ENCODE measurements at regions of chr6 and their contacts with region 1.

Region 1: DNA sequence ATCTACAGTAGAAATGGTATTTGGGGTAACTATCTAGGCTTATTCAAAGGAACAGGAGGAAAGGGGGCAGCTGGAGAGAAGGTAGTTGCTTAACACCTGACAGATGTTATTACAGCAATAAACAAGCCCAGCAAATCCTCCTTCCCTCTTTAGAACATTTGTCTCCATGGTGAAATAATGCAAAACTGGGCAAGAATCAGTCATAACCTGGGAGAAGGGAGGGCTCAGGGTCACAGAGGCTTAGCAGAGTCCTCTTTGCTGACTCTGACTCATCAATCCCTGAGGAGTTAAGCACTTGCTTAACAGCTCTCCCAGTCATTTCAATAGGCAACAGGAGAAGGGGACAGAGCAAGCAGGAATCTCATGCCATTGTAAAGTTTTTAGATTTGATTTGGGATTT is 230.3 kb downstream of the IBTK start:
- DNase-seq: no peak
- ATAC-seq: peak; percentile 90

Region 2: GRCh38 chr6:81401970-81402690 is 615.2 kb before region 1 on chr6:
- intact Hi-C with region 1: no loop called
- DNase-seq: no peak
- ATAC-seq: no peak

Region 3: DNA sequence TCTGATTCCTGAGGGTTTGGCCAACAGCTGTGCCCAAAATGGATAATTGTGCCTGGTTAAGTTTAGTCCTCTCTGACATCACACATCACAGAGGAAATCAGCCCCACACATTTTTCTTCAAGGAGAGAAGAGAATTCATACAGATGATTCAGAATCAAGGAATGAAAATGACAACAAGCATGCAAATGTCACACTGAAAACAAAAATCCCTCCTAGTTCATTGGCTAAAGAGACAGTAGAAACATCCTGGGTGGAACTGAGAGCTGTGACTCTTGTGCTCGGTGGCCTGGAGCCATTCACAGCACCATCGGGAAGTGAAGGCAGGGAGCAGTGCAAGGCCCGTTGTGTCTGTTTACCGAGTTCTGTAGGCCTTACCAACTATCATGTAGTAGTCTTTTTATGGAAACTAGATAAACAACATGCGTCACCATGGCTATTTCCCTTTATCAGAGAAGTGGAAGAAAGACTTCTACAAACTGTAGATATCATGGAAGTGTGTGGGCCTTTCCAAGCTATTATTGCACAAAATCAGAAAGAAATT is 183.1 kb before region 1 on chr6:
- intact Hi-C with region 1: loop called (anchors 10 kb)
- DNase-seq: peak; percentile 68
- ATAC-seq: peak; percentile 97

Region 4: DNA sequence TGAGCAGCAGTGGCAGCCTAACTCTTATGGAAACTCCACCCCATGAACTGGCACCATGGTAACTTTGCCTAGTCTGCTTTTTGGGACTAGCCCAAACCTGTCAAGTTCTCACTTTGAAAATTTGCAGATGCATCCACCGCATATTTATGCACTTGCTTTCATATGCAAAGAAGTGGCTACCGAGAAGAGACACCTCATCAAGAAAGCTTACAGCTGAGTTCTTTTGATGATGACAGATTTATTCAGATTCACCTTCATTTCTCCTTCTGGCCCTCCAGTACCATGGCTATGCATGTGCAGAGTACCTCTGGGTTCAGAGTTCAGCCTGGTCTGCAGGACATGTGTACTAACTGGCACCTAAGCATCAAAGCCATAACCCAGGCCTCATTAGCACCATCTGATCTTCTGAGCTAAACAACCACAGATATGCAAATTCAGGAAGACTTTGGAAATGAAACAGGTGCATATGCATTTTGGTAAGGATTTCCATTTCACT is 110.5 kb before region 1 on chr6:
- intact Hi-C with region 1: loop called (anchors 10 kb)
- DNase-seq: no peak
- ATAC-seq: peak; percentile 43

Region 5: DNA sequence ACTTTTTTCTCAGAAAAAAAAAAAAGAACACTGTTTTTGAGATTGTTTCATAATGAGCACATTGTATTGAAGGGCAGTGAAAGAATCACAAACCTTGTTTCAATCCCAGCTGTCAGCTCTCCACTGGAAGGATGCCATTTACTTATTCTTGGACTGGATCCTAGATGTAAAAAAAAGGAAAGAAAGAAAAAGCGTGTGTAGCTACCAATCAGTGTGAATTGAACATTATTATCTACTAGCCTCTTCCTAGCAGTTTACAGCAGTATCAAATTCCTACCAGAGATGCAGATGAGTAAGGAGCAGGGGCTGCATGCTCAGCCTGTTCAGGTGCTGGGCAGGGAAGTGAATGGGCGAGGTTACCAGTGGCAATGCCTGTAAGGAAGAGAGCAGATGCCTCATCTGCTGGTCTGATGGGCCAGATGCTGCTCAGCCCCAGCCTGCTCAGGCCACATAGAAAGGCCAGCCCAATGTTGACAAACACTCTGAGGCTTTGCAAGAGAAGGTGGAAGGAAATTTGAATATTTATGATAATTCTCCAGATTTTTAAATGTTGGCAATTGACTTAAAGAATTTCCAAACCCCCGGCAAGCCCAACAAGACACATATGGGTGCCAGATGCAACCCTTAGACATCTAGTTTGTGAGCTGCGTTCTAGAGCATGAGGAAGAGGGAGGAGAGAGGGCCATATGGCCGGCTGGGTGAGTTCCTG is 40.7 kb after region 1 on chr6:
- intact Hi-C with region 1: no loop called
- DNase-seq: no peak
- ATAC-seq: peak; percentile 75